ENCODE measurements at regions of chr3 and their contacts with region 1.

Region 1: GRCh38 chr3:136196401-136197158 is 445 bp upstream of the MSL2 start:
- DNase-seq: peak; percentile 96

Region 2: GRCh38 chr3:136181741-136182140 is 14.8 kb before region 1 on chr3:
- CTCF ChIA-PET with region 1: no interaction called
- POLR2A ChIA-PET with region 1: interaction called, 27 read pairs
- DNase-seq: no peak

Region 3: DNA sequence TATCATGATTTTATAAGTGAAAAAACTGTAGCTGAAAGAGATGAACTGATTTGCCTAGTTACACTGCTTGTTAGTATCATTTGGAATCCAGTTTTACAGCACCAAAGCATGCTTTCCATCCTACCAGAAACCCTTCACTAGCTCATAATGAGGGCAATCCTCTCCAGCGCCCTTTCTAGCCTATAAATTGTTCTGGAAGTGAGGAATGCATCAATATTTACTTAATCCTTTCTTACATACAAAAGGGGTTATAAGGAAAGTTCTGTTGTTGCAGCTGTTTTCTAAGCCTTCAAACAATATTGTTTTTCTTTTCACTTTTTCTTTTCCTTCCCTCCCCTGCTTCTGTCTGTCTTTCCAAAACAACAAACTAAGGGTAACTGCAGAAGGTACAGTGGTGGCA is 42.5 kb after region 1 on chr3:
- CTCF ChIA-PET with region 1: no interaction called
- POLR2A ChIA-PET with region 1: interaction called, 10 read pairs
- DNase-seq: no peak

Region 4: GRCh38 chr3:136250226-136250902 is 53.8 kb after region 1 on chr3 and contains the start of gene PCCB:
- CTCF ChIA-PET with region 1: interaction called, 4 read pairs
- POLR2A ChIA-PET with region 1: interaction called, 12 read pairs
- DNase-seq: peak; percentile 94

Region 5: DNA sequence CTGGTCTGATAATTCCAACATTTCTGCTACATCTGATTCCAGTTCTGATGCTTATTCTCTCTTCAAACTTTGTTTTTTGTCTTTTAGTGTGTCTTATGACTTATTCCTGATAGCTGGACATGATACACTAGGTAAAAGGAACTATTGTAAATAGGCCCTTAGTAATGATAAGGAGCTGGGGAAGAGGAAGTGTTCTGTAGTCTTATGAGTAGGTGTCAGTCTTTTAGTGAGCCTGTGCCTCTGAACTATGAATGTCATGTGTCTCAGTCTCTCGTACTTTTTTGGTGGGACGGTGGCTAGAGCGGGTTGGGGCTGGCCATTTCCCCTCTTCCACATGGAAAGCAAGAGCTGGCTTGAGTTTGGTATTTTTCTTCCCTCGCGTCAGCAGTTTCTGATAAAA is 94.7 kb after region 1 on chr3:
- CTCF ChIA-PET with region 1: no interaction called
- POLR2A ChIA-PET with region 1: no interaction called
- DNase-seq: no peak

Region 6: GRCh38 chr3:136353461-136353860 is 156.9 kb after region 1 on chr3:
- CTCF ChIA-PET with region 1: no interaction called
- POLR2A ChIA-PET with region 1: no interaction called
- DNase-seq: no peak

Region 7: GRCh38 chr3:136428167-136428566 is 231.6 kb after region 1 on chr3:
- CTCF ChIA-PET with region 1: no interaction called
- POLR2A ChIA-PET with region 1: no interaction called
- DNase-seq: no peak

Measured in HEK293T (cell line).